ENCODE measurements at regions of chr2 and their contacts with region 1.

Region 1: DNA sequence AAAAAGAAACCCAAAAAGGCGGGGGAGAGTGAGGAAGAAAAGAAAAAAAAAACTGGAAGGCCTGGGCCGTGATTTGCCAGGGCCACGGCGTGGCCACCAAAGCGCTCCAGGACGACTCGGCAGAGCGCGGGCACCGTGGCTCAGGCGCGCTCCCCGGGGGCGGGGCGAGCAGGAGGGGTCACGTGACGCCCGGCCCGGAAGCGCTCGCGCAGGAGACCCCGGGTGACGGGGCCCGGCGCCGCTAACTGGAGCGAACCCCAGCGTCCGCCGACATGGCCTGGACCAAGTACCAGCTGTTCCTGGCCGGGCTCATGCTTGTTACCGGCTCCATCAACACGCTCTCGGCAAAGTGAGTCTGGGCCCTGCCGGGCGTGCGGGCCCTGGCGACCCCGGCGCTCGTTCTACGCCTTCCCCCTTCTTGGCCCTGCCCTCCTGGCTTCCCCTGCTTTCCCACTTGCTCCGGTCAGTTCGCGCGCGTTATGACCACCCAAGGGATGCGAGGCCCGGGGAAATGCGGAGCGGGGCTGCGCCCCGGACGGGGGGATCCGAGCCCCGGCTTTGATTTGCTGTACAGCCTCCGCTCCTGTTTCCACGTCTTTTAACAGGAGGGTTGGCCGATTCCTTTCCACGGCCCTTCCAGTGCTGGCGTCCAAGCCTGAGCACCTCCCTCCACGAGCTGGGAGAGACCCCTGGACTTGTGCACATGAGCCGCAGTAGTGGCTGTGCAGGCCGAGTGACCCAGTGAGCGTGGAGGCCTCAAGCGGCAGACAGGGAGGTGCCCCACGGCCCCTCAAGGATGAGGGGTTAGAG is at the start of gene SLC35F6:
- DNase-seq: peak; percentile 72 to 98 (median 84)

Region 2: GRCh38 chr2:26615371-26615801 is 148.9 kb before region 1 on chr2:
- intact Hi-C with region 1: no loop called
- DNase-seq: peak in 3 of 10 donors; percentile 19 to 89 (median 46)

Region 3: GRCh38 chr2:26811261-26811660 is 47.0 kb after region 1 on chr2:
- intact Hi-C with region 1: loop called (anchors 1 kb)
- DNase-seq: peak in 1 of 10 donors; percentile 57

Region 4: DNA sequence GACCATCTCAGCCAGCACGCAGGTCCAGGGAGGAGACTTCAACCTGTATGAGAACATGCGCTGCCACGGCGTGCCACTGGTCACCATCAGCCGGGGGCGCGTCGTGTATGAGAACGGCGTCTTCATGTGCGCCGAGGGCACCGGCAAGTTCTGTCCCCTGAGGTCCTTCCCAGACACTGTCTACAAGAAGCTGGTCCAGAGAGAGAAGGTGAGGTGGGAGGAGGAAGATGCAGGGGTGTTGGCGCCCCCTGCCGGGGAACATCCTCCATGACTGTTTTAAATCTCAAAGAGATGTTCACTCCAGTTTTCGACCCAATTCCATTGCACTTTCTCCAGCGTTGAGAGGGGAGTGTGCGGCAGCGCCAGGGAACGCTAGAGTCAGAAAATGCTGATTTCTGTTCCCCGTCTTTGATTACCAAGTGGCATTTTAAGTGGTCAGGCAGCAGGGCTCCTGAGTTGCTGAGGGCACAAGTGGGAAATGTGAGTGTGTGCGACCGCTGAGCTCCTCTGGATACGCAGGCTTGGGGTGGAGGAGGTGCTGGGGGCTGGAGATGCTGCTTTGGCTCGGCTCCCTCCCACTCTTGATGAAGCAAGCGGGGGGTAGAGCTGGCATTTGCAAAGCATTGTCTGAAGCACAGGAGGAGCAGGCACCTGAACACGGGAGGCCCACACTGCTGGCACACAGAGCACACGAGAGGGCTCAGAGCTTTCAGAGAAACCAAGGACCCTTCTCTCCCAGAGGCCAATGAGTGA is 178.4 kb after region 1 on chr2:
- intact Hi-C with region 1: loop called (anchors 10 kb)
- DNase-seq: peak; percentile 64 to 97 (median 80)

Region 5: DNA sequence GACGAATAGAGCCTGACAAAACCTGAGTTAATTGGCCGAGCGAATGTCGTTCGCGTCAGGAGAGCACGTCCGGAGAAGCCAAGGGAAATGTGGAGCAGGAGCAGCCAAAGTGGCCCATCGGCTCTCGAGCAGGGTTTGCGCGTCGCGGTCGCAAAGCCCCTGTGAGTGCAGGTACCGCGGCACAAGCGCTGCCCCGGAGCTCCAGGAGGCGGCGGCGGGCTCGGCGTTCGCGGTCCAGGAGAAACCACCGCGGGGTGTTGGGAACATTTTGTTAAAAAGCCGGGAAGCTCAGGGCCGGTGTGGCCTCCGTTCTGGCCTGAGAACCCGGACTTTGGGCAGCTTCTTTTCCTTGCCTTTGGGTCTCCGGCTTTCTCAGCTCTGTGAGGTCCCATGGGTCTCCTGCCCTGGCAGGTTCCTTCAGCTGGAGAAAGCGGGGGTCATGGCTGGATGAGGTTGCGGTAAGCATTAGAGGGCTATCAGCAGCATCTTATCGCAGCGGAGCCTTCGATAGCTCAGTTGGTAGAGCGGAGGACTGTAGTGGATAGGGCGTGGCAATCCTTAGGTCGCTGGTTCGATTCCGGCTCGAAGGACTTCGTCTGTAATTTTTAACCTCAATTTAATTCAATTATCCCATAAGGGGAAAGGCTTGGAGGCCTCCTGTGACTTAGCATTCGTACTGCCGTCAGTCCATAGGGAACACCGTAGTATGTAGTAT is 286.2 kb after region 1 on chr2:
- intact Hi-C with region 1: no loop called
- DNase-seq: peak; percentile 89 to 99 (median 93)

Measured in posterior cingulate gyrus (tissue), 11 donors.